HepG2 (cell line): ENCODE measurements at regions of chr5 and their contacts with region 1.

Region 1: GRCh38 chr5:81763294-81763928 is 12.5 kb upstream of the SSBP2 start:
- DNase-seq: no peak
- ATAC-seq: no peak
- H3K4me3 ChIP-seq: no peak overlapping the region
- H3K27ac ChIP-seq: no peak overlapping the region
- H3K4me1 ChIP-seq: no peaks in the 10 kb centered on the region
- H3K27me3 ChIP-seq: no peaks in the 10 kb centered on the region
- CTCF ChIP-seq: no peak
- EP300 ChIP-seq: no peak
- POLR2A ChIP-seq: no peak
- RAD21 ChIP-seq: no peak

Region 2: DNA sequence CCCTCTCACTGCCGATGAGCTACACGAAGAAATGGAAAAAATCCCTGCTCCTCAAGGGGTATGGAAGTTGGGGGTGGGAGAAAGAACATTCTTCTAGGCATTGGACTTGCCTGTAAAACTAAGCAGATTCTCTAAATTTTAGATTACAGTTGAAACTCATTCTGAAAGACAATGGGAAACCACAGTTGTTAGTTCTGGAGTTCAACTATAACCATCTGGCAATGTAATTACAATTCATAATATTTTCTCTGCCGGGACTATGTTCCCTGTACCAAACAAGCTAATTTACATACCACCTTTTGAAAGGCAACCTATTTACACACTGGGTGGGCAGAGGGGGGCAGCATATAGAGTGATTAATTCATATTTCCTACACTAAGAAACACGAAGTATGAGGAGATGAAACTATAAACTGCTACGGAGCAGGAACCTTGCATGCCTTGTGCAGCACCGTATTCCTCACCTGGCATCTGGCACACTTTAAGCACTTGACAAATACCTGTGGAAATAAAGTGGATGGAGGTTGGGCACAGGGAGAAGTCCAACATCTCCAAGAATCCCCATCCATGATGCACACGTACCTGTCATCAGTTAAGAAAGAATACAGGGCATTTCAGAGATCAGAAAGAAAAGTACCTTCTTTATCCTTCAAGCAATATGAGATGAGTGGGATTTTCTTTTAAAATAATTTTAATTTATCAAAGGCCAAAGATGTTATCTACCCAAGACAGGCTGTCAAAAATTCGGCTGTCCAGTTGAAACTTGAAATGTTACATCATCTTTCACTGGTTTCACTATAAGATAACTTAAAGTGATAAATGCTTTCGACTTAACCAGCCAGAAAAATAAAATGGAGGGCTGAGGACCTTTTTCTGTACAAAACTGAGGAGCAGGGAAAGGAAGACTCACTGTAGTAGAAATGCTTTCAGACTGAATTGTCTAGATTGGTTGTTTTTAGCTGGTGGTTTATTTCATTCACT is 66.7 kb before region 1 on chr5:
- CTCF ChIA-PET with region 1: no interaction called
- POLR2A ChIA-PET with region 1: no interaction called
- in situ Hi-C with region 1: no loop called
- intact Hi-C with region 1: loop called (anchors 2 kb)
- DNase-seq: no peak
- ATAC-seq: no peak
- H3K4me3 ChIP-seq: no peak overlapping the region
- H3K27ac ChIP-seq: no peak overlapping the region
- H3K4me1 ChIP-seq: no peaks in the 10 kb centered on the region
- H3K27me3 ChIP-seq: no peaks in the 10 kb centered on the region
- CTCF ChIP-seq: no peak
- EP300 ChIP-seq: no peak
- POLR2A ChIP-seq: no peak
- RAD21 ChIP-seq: no peak